A673 (cell line): ENCODE measurements at regions of chr11 and their contacts with region 1.

Region 1: DNA sequence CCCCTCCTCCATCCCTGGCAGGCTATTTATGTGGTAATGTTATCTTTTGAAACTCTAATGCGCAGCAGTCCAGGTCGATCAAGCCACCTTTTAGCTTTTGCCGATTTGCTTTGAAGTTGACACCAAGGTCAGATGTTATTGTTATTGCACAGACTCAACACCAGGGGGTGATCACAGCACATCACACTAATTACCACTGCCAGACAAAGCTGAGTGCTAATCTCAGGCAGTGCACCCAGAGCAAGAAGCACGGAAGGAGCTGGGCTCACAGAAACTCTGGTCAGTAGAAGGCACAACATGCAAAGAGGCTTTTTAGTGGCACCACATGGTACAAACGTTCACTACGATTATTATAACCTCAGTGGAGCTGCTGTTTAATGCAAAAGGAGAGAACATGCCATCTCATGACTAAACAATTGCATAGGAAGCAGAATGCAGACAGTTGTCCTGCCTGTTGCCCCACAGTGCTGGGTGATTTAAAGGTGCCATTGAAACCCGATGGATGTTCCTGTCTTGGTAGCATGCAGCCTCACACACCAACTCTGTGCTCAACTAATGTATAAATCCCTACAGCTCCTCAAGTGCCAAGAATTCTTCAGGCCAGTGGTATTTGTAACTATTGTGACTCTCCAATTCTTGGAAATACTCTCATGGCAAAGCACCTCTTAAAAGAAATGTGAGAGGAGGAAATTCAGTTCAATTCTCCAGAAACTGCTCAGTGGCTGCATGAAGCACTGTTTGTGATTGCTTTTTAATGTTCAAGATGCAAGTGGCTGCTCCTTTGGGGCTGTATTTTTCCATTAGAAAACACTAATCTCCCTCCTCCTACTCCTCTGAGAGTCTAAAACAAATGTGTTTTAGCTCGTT is 353.9 kb upstream of the DDI1 start:
- DNase-seq: peak; percentile 84
- H3K4me3 ChIP-seq: no peak overlapping the region
- H3K27ac ChIP-seq: no peak overlapping the region
- H3K4me1 ChIP-seq: peaks cover 12% of the 10 kb centered on the region
- H3K27me3 ChIP-seq: no peaks in the 10 kb centered on the region
- CTCF ChIP-seq: peak; percentile 91

Region 2: DNA sequence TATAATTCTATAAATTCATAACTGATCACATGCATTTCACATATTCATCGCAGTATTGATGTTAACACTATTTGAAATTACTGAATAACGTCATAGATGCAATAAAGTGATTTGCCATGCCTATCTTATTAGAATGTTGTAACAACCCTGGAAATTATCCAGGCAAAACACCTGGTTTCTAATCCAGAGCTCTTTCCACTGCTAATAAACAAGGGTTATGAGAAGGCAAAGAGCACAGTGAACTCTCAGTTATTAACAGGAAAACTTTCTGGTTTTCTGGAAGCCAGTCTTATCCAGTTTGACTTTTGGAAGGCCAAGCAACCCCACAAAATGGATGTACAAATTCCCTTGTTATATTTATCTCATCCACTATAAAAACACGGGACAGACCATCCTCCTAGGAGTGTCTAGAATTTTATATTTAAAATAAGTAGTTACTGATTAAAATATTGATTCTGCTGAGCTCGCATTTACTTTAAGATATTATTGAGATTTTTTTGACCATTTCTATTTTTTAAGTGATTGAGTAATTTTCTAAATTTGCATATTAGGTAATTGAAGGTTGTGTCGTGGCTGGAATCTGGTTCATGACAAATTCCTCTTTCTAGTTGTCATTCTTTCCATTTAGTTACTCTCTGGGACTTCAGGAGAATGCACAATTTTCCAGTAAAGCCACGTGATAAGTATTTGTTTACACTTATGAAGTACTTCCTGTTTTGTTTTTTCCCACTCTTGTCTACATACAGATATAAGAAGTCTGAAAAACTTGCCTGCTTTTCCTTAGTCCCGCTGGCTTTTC is 638.5 kb before region 1 on chr11:
- CTCF ChIA-PET with region 1: no interaction called
- POLR2A ChIA-PET with region 1: no interaction called
- intact Hi-C with region 1: no loop called
- DNase-seq: no peak
- H3K4me3 ChIP-seq: no peak overlapping the region
- H3K27ac ChIP-seq: no peak overlapping the region
- H3K4me1 ChIP-seq: peaks cover 10% of the 10 kb centered on the region
- H3K27me3 ChIP-seq: no peaks in the 10 kb centered on the region
- CTCF ChIP-seq: no peak

Region 3: DNA sequence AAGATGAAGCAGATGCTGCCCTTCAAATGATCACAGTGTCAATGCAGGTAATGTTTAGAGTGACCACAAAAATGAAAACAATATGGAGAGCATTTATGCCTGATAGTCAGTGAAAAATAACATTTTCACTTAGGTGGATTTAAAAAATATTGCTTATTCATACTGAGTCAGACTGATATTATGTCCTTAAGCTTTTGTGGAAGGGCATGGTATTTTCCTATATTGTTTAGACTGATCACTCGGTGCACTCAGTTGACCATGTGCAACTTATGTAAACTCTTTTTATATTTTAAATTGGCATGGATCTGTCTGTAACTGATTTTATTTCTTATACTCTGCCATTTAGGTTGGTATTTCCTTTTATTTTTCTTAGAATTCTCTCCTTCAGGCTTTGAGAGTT is 466.7 kb before region 1 on chr11:
- CTCF ChIA-PET with region 1: interaction called, 10 read pairs
- POLR2A ChIA-PET with region 1: no interaction called
- intact Hi-C with region 1: no loop called
- DNase-seq: no peak
- H3K4me3 ChIP-seq: no peak overlapping the region
- H3K27ac ChIP-seq: no peak overlapping the region
- H3K4me1 ChIP-seq: no peaks in the 10 kb centered on the region
- H3K27me3 ChIP-seq: no peaks in the 10 kb centered on the region
- CTCF ChIP-seq: no peak

Region 4: DNA sequence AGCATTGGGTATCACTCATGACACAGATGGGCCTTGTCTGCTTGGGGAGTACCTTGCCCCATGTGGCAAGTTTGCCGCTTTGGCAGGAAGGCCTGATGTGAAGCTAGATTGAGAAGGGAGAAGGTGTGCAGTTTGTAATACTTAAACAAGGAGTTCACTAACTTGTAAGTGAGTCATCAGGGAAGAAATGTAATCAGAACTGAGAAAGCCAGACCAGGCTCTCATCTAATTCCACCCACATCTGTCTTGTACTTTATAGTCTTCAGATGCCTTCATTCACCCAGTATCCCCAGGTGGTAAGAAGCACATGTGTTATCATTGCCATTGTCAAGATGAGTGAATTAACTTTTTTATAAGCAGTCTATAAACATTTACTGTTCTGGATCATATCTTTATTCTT is 237.9 kb after region 1 on chr11:
- CTCF ChIA-PET with region 1: interaction called, 4 read pairs
- POLR2A ChIA-PET with region 1: no interaction called
- intact Hi-C with region 1: loop called (anchors 5 kb)
- DNase-seq: no peak
- H3K4me3 ChIP-seq: no peak overlapping the region
- H3K27ac ChIP-seq: no peak overlapping the region
- H3K4me1 ChIP-seq: no peaks in the 10 kb centered on the region
- H3K27me3 ChIP-seq: no peaks in the 10 kb centered on the region
- CTCF ChIP-seq: no peak

Region 5: DNA sequence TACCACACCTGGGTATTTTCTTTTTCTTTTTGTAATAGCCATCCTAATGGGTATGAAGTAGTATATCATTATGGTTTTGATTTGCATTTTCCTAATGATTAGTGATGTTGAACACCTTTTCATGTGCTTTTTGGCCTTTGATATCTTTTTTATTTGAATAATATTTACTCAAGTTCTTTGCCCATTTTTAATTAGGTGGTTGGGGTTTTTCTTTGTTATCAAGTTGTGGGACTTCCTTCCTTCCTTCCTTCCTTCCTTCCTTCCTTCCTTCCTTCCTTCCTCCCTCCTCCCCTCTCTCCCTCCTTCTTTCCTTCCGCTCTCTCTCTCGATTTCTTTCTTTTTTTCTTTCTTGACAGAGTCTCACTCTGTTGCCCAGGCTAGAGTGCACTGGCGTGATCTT is 556.4 kb after region 1 on chr11:
- CTCF ChIA-PET with region 1: no interaction called
- POLR2A ChIA-PET with region 1: no interaction called
- intact Hi-C with region 1: loop called (anchors 5 kb)
- DNase-seq: peak; percentile 66
- H3K4me3 ChIP-seq: no peak overlapping the region
- H3K27ac ChIP-seq: peak overlapping the region; percentile 35
- H3K4me1 ChIP-seq: no peaks in the 10 kb centered on the region
- H3K27me3 ChIP-seq: no peaks in the 10 kb centered on the region
- CTCF ChIP-seq: no peak

Region 6: GRCh38 chr11:104333977-104334376 is 651.4 kb after region 1 on chr11:
- CTCF ChIA-PET with region 1: interaction called, 5 read pairs
- POLR2A ChIA-PET with region 1: no interaction called
- intact Hi-C with region 1: loop called (anchors 10 kb)
- DNase-seq: peak; percentile 67
- H3K4me3 ChIP-seq: no peak overlapping the region
- H3K27ac ChIP-seq: no peak overlapping the region
- H3K4me1 ChIP-seq: no peaks in the 10 kb centered on the region
- H3K27me3 ChIP-seq: no peaks in the 10 kb centered on the region
- CTCF ChIP-seq: peak; percentile 55